Activated naive CD4-positive, alpha-beta T cell treated with anti-CD3 and anti-CD28 coated beads for 36 hours (primary cell): ENCODE measurements at regions of chr16 and their contacts with region 1.

Region 1: DNA sequence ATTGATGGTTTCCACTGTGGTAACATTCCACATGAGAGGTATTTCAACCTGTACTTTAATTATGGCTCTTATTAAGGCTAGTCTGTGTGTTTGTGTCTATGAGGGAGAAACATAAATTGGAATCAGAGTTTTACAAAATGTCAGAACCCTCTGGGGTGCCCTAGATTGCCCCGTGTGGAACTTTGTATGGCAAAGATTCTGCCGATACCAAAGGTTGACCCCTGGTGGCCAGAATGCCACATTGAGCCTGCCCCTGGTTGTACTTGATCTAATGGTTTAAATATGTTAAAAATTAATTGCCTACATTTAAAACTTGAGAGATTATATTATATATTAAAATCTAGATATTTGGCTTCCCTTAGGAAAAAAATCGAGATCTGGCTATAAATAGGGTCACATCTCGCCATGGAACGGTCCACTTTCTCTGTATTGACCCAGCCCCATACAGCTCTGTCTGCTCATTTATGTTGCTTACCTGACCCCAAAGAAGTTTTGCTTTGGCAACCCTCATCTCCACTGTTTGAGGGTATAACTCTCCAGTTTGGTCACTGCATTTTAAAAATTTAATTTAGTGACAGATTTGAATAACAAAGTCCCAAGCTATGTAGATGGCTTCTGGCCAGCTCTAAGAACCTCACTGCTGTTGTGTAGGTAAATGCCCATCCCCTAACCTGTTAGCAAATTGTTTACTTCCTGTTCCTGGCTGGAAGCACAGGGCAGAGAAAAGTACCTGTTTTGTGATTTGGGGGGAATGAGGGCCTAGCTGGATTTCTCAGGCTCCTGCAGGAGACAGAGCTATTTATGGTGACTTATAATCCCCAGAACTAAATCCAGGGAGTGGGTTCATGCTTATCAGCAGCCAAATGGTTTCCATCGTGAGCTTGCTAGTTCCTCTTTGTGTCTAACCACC is 95.0 kb downstream of the PLCG2 start:
- DNase-seq: peak; percentile 83
- H3K4me3 Mint-ChIP-seq: no peak overlapping the region
- H3K27ac Mint-ChIP-seq: no peak overlapping the region
- H3K4me1 Mint-ChIP-seq: peaks cover 12% of the 10 kb centered on the region
- H3K27me3 Mint-ChIP-seq: peaks cover 8% of the 10 kb centered on the region

Region 2: GRCh38 chr16:81403616-81404373 is 470.3 kb before region 1 on chr16:
- CTCF ChIA-PET with region 1: no interaction called
- intact Hi-C with region 1: loop called (anchors 10 kb)
- DNase-seq: peak; percentile 89
- H3K4me3 Mint-ChIP-seq: no peak overlapping the region
- H3K27ac Mint-ChIP-seq: no peak overlapping the region
- H3K4me1 Mint-ChIP-seq: no peaks in the 10 kb centered on the region
- H3K27me3 Mint-ChIP-seq: no peaks in the 10 kb centered on the region

Region 3: GRCh38 chr16:81478876-81479511 is 395.1 kb before region 1 on chr16:
- CTCF ChIA-PET with region 1: no interaction called
- intact Hi-C with region 1: no loop called
- DNase-seq: no peak
- H3K4me3 Mint-ChIP-seq: no peak overlapping the region
- H3K27ac Mint-ChIP-seq: no peak overlapping the region
- H3K4me1 Mint-ChIP-seq: peaks cover 58% of the 10 kb centered on the region
- H3K27me3 Mint-ChIP-seq: no peaks in the 10 kb centered on the region

Region 4: GRCh38 chr16:81745704-81746558 is 128.2 kb before region 1 on chr16:
- CTCF ChIA-PET with region 1: interaction called, 5 read pairs
- intact Hi-C with region 1: loop called (anchors 2 kb)
- DNase-seq: peak; percentile 85
- H3K4me3 Mint-ChIP-seq: peak overlapping the region; percentile 78
- H3K27ac Mint-ChIP-seq: peak overlapping the region; percentile 82
- H3K4me1 Mint-ChIP-seq: peaks cover 14% of the 10 kb centered on the region
- H3K27me3 Mint-ChIP-seq: no peaks in the 10 kb centered on the region

Region 5: GRCh38 chr16:81798311-81799137 is 75.6 kb before region 1 on chr16:
- CTCF ChIA-PET with region 1: interaction called, 3 read pairs
- intact Hi-C with region 1: loop called (anchors 2 kb)
- DNase-seq: peak; percentile 85
- H3K4me3 Mint-ChIP-seq: peak overlapping the region; percentile 55
- H3K27ac Mint-ChIP-seq: peak overlapping the region; percentile 90
- H3K4me1 Mint-ChIP-seq: peaks cover 25% of the 10 kb centered on the region
- H3K27me3 Mint-ChIP-seq: no peaks in the 10 kb centered on the region

Region 6: GRCh38 chr16:81885976-81886586 is 12.0 kb after region 1 on chr16:
- CTCF ChIA-PET with region 1: interaction called, 39 read pairs
- intact Hi-C with region 1: no loop called
- DNase-seq: peak; percentile 35
- H3K4me3 Mint-ChIP-seq: no peak overlapping the region
- H3K27ac Mint-ChIP-seq: no peak overlapping the region
- H3K4me1 Mint-ChIP-seq: no peaks in the 10 kb centered on the region
- H3K27me3 Mint-ChIP-seq: no peaks in the 10 kb centered on the region